Motor neuron (in vitro differentiated cells): ENCODE measurements at regions of chr1 and their contacts with region 1.

Region 1: GRCh38 chr1:102120910-102121309 is 124.2 kb upstream of the OLFM3 start:
- ATAC-seq: peak in 3 of 8 experiments; percentile 12 to 96 (median 29)
- H3K4me3 ChIP-seq: no peak overlapping the region
- H3K27ac ChIP-seq: no peak overlapping the region
- H3K4me1 ChIP-seq: peaks cover 0 to 7% of the 10 kb centered on the region in 2 donors

Region 2: DNA sequence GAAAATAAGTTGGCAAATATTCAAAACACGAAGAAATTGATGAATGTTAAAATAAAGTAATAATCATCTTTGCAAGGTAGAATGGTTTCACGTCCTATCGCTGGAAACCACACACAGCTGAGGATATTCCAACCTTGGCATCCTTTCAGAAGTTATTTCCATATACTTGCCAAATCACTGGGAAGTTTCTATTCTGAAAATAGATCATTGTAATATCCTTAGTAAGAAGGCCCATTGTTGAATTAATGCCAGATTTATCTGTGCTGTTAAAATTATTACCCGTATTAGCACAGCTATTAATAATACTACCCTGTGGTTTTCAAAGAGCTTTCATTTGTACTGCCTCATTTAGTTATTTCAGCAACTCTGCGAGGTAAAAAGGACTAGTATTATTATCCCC is 205.3 kb before region 1 on chr1:
- in situ Hi-C with region 1: no loop called
- ATAC-seq: peak in 1 of 8 experiments; percentile 14
- H3K4me3 ChIP-seq: no peak overlapping the region
- H3K27ac ChIP-seq: no peak overlapping the region
- H3K4me1 ChIP-seq: peaks cover 6 to 7% of the 10 kb centered on the region in 2 donors

Region 3: DNA sequence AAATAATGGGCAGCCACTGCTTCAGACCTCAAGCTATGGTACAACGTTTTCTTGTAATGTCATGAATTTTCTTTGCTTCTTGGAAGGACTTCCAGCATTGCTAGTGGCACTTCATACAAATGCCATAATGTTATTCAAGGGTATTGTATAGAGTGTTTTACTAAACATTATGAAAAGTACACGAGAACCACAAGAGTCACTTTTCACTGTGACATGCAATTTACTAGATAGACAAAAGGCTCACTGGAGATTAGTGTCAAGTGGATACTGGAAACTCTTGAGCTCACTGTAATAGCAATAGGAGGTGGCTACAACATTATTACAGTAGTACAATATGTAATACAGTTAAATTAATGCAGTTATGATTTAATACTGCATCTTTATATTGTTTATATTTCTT is 118.9 kb before region 1 on chr1:
- in situ Hi-C with region 1: loop called in 1 of 9 experiments (anchors 25 kb)
- ATAC-seq: no peak
- H3K4me3 ChIP-seq: no peak overlapping the region
- H3K27ac ChIP-seq: no peak overlapping the region
- H3K4me1 ChIP-seq: peaks cover 0 to 2% of the 10 kb centered on the region in 2 donors